Right ventricle myocardium inferior (tissue), 1 donor: ENCODE measurements at regions of chr12 and their contacts with region 1.

Region 1: GRCh38 chr12:32828552-32828951 is 68.0 kb downstream of the PKP2 start:
- DNase-seq: no peak
- ATAC-seq: no peak

Region 2: DNA sequence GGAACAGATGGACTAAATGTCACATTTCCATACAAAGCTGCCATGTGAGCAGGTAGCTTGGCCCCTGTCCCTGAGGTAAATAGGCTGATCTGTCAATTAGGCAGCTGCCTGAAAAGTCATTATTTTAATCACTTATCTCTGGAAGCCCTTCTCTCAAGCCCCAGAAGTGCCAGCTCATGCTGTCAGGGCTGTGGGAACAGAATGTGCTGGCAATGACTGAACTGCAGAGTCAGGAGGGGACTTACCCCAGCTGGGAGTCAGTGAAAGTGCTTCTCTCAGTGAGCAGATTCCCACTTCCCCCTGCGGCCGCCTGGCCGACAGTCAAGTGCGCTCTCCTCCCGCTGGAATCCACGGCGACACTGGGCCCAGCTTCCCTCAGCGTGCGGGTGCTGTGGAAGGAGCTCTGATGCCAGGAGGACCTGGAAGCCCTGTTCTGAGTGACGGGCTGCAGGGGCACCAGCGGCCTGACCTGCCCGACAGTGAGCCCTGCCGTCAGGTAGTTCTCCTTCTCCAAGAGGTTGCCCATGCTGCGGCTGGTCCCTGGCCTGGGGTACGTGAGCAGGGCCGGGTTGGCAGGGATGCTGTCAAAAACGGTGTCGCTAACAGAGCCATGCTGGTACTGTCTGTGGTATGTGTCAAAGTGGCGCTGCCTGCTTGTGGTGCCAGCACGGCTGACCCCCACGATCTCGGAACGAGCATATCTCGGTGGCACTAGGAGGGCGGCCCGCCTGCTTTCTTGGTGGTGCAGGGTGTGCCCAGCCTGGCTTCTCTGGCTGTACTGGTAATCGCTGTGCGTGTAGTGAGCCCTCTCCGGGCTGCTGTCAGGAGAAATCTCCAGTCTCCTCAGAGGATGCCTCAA is 49.3 kb after region 1 on chr12:
- intact Hi-C with region 1: loop called (anchors 2 kb)
- DNase-seq: peak; percentile 84
- ATAC-seq: peak; percentile 89